ENCODE measurements at regions of chr6 and their contacts with region 1.

Region 1: DNA sequence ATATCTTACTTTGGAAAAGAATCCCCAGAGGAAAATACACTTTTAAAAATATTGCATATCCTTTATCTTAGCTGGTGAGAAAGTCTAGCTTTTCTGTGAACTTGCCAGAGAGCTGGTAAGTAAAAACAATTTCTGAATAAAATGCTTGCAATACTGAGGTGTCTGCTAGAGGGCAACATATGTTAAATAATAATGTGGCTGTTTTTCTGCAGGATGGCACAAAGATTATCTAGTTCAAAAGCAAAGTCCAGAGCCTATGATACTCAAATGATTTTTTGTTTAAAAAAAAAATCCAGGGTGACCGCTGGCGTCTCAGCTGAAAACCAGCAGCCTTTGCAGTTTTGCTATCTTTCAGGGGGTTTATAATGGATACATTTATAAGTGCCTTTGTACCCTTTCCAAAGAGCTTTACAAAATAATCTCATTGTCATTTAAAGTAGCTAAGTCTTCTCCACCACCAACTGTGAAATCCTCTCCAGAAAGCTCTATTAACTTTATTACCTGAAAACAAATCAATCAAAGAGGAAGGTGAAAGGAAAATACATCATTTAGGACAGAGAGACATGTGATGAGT is 194.9 kb downstream of the PHACTR1 start:
- DNase-seq: no peak
- ATAC-seq: peak; percentile 33

Region 2: DNA sequence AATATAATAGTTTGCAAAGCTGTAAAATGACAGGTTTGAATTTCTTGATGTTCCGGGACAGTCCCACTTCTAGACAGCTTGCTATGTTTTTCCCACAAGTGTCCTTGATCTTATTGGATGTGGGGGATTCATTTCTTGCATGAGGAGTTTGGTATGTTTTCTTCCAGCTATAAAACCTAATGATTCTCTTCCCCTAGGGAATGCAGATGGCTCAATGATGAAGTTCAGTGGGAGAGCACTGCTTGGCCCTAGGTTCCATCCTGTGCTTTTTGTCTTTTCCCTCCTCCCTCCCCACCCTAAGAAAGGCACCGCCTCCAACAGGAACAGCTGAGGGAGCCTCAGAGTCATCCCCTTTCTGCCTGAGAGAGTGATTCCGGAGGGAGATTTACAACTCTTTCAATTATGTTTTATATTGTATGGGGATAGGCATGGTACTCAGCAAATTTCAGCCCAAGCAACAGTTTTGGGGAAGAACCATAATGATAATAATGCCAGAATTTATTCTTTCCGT is 45.7 kb before region 1 on chr6:
- intact Hi-C with region 1: no loop called
- DNase-seq: no peak
- ATAC-seq: no peak

Region 3: DNA sequence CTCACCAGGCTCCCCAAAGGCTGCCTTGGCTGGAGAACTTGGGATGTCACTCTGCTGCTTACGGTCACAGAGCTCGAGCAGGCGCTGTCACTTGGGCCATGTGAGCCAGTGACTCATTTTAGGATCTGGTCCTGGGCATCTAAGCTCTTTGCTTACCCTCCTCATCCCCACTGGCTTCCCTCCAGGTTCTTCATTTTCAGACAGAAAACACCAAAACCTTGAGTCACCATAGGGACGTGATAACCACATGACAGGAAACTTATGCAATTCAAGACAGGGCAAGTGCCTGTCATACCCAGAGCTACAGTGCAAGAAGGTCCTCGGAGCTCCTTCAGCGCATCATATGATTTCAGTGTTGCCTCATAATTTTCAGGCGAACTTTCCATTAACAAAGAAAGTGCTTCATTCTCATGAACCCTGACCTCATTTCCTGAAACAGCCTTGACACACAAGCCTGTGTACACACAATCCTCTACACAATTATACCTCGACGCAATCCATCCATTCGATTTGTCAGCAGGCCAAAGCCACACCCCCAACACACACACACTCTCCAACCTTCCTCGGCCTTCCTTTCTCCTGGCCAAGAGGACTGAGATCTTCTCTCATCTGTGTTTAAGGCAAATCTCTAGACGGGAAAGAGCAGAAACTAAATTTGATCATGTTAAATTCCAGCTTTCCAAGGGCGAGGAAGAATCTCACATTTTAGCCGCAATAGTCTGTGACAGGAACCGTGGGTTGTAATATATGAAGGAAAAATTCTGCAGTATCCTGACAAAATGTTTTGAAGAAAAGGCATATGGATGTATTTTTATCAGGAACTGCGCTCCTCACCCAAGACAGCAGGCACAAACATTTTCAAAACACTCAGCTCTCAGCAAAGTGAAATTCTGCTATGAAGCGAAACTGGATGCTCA is 391.5 kb after region 1 on chr6:
- intact Hi-C with region 1: loop called (anchors 10 kb)
- DNase-seq: peak; percentile 42
- ATAC-seq: peak; percentile 73